Activated T-helper 2 cell treated with anti-CD3 and anti-CD28 coated beads, Interferon-gamma antibody, Interleukin-2, Interleukin-4, amounts not matched to agents 10 μg/mL and 5 μg/mL and 100 μg/mL, durations not matched to agents 14 hours and 24 hours and 36 hours (primary cell): ENCODE measurements at regions of chr17 and their contacts with region 1.

Region 1: DNA sequence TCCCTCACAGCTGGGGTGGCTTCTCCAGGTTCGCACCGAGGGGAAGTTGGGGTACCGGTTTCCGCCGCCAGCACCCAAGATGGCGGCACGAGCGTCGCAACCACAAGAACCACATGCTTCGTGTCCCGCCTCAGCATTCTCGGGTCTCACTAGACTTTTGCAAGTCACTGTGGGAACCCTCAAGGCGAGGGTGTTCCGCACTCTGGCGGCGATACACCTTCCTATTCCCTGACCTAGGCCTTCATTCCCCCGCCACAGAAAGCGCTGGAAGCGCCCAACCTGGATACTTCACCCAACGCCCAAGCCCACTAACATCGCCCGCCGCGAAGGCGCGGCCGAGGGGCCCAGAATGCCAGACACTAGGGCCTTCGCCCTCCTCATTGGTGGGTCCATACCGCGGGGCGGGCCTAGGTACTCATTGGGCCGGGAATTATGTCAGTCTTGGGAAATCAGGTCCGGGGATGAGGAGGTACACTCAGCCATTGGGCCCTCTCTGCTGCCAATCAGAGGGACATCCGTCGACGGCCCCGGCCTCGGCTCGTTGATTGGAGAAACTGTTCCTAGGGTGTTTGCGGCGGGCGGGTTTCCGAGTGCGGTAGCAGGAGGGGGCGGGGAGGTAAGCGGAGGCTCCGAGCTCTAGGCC is at the start of gene NFE2L1:
- DNase-seq: peak; percentile 98
- H3K4me3 Mint-ChIP-seq: peak within 1 kb of the TSS; percentile 95
- H3K27ac Mint-ChIP-seq: peak within 1 kb of the TSS; percentile 99
- H3K4me1 Mint-ChIP-seq: peaks cover 38% of the 10 kb centered on the region
- H3K27me3 Mint-ChIP-seq: no peaks in the 10 kb centered on the region
- total RNA-seq, gene NFE2L1: 66.2 and 71.3 TPM in 2 replicates

Region 2: GRCh38 chr17:47990962-47991731 is 56.7 kb before region 1 on chr17:
- intact Hi-C with region 1: no loop called
- DNase-seq: no peak
- H3K4me3 Mint-ChIP-seq: no peak overlapping the region
- H3K27ac Mint-ChIP-seq: no peak overlapping the region
- H3K4me1 Mint-ChIP-seq: peaks cover 14% of the 10 kb centered on the region
- H3K27me3 Mint-ChIP-seq: peaks cover 6% of the 10 kb centered on the region

Region 3: GRCh38 chr17:48101012-48101720 is 53.3 kb after region 1 on chr17 and contains the start of gene CBX1:
- intact Hi-C with region 1: loop called (anchors 1 kb)
- DNase-seq: peak; percentile 94
- H3K4me3 Mint-ChIP-seq: peak within 1 kb of the TSS; percentile 99
- H3K27ac Mint-ChIP-seq: peak within 1 kb of the TSS; percentile 95
- H3K4me1 Mint-ChIP-seq: peaks cover 35% of the 10 kb centered on the region
- H3K27me3 Mint-ChIP-seq: no peaks in the 10 kb centered on the region
- total RNA-seq, gene CBX1: 64.5 TPM in 2 replicates

Region 4: DNA sequence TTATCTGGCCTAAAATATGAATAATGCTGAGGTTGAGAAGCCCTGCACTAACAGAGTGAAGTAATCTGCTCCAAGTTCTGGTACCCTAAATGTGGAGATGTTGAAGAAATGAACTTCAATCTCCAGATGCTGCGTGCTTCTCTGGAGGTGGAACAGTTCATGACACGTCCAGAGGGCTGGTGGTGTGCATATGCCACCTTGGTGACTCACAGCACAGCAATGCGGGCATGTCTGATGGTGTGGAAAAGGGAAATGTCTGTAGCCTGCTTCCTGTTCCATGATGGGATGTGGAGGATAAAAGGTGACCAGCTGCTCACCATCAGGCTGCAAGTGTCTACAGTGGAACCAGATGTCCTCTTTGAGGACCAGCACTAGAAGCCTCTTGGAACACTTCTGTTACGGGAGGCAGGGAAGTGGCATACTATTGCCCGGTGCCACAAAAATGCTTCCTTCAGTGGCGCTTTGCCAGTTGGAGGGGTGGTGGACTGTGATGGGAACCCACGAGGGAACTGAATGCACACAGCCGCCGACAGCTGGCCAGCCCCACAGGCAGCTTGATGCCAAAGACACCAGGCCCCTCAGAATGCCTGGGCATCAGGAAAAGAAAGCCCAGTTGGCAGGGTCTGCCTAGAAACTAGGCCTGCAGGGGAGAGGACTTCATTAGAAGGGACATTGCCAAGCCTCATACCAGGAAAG is 79.6 kb after region 1 on chr17:
- intact Hi-C with region 1: no loop called
- DNase-seq: no peak
- H3K4me3 Mint-ChIP-seq: no peak overlapping the region
- H3K27ac Mint-ChIP-seq: no peak overlapping the region
- H3K4me1 Mint-ChIP-seq: peaks cover 2% of the 10 kb centered on the region
- H3K27me3 Mint-ChIP-seq: no peaks in the 10 kb centered on the region